Naive thymus-derived CD4-positive, alpha-beta T cell (primary cell): ENCODE measurements at regions of chr2 and their contacts with region 1.

Region 1: DNA sequence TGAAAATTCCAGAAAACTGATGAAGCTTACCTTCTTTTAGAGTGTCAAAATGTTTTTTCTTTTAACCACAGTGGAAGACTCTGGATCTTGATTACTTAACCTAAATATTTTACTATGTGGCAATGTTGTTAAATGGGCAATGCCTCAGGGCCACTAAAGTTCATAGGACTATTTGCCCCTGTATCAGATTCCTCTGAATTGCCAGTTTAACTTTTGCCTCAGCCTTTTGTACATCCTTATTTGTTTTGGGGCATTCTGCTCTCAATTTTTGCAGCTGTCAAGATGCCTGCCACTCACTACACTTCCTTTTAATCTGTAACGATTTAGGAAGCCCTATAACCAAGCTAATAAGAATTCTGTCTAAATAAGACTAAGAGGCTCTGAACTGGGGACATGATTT is 31.7 kb upstream of the SERTAD2 start:
- DNase-seq: no peak
- ATAC-seq: no peak
- H3K4me3 ChIP-seq: no peak overlapping the region
- H3K4me3 Mint-ChIP-seq: no peak overlapping the region
- H3K27ac ChIP-seq: no peak overlapping the region
- H3K27ac Mint-ChIP-seq: no peak overlapping the region
- H3K4me1 ChIP-seq: no peaks in the 10 kb centered on the region
- H3K4me1 Mint-ChIP-seq: peaks cover 13 to 54% (median 22%) of the 10 kb centered on the region in 7 donors
- H3K27me3 ChIP-seq: no peaks in the 10 kb centered on the region
- H3K27me3 Mint-ChIP-seq: peaks cover 0 to 5% (median 0%) of the 10 kb centered on the region in 5 donors

Region 2: DNA sequence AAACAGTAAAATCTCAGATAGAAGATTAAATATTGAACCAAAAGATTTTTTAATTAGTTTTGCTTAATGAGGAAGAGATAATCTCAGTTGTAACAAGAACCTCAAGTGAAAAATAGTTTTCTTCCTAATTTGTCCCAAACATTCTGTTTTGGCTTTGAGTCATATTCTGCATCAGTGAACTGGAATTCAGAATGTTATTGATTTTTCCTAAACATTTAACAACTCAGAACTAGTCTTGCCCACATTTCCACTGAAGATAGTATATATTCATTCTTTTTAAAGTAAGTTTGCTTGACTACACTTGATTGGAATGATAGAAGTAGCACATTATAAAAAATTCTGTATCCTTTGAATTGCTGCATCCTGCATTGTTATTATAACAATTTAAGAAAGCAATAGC is 929.5 kb before region 1 on chr2:
- CTCF ChIA-PET with region 1: no interaction called
- POLR2A ChIA-PET with region 1: no interaction called
- intact Hi-C with region 1: no loop called
- DNase-seq: no peak
- ATAC-seq: no peak
- H3K4me3 ChIP-seq: no peak overlapping the region
- H3K4me3 Mint-ChIP-seq: no peak overlapping the region
- H3K27ac ChIP-seq: no peak overlapping the region
- H3K27ac Mint-ChIP-seq: no peak overlapping the region
- H3K4me1 ChIP-seq: no peaks in the 10 kb centered on the region
- H3K4me1 Mint-ChIP-seq: peaks cover 0 to 2% (median 0%) of the 10 kb centered on the region in 7 donors
- H3K27me3 ChIP-seq: no peaks in the 10 kb centered on the region
- H3K27me3 Mint-ChIP-seq: peaks cover 8 to 25% (median 9%) of the 10 kb centered on the region in 5 donors

Region 3: DNA sequence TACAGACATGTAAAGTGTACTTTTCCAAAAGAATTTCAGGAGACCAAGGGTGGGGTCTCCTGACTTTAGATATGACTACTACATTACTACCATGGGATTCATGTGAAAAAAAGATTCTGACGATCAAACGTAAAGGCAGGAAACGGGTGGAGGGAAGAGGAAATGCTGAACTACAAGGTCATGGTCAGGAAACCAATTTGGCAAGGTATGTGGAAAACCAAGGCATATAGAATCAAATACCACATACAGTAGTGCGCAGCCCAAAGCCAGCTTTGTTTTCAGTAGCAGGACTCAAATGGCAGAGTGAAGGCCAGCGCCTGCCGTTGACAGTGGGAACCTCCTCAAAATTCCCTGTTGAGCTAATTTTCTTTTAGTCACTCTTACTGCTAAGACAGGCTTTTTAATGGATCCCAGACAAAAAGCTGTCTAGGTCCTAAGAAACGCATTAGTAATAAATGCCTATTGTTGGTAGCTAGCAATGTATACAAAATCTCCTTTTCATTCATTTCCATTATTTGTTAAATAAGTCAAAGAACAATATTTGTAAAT is 25.9 kb after region 1 on chr2:
- CTCF ChIA-PET with region 1: no interaction called
- POLR2A ChIA-PET with region 1: no interaction called
- intact Hi-C with region 1: loop called in 1 of 2 experiments (anchors 2 kb)
- DNase-seq: peak in 5 of 9 donors; percentile 3 to 19 (median 12)
- ATAC-seq: no peak
- H3K4me3 ChIP-seq: no peak overlapping the region
- H3K4me3 Mint-ChIP-seq: peak overlapping the region; percentile 22 to 80 (median 68)
- H3K27ac ChIP-seq: no peak overlapping the region
- H3K27ac Mint-ChIP-seq: peak overlapping the region in 6 of 9 donors; percentile 5 to 76 (median 12)
- H3K4me1 ChIP-seq: peaks cover 5 to 15% of the 10 kb centered on the region in 2 donors
- H3K4me1 Mint-ChIP-seq: peaks cover 17 to 33% (median 19%) of the 10 kb centered on the region in 7 donors
- H3K27me3 ChIP-seq: no peaks in the 10 kb centered on the region
- H3K27me3 Mint-ChIP-seq: no peaks in the 10 kb centered on the region